ENCODE measurements at regions of chr3 and their contacts with region 1.

Region 1: DNA sequence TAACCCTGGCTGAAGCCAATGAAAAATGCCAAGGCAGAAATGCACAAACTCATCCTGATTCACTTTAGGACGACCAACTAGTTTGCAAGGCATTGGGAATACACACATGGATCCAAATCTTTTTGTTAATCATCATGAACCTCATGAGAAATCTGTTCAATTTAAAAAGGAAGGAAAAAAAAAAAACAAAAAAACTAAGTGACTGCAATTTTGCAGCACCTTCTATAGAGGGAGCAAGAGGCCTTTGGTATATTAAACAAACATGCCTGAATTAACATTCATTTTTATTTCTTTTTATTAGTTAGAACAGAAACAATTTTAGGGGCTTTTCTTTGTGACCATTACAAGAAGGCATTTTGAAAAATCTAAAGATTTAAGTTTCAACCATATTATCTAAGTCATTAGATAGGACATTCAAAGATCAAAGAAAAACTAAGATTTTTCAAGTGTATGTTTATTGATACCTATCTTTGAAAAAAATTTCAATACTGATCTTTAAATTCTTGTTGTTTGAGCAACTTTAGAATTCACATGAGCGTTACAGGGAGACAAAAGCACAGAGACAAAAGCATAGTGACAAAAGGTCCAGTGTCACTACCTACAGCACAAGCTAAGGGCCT is 182.4 kb downstream of the CBLB start:
- DNase-seq: peak in 4 of 5 donors; percentile 51 to 56 (median 52)
- H3K4me3 ChIP-seq: no peak overlapping the region
- H3K4me3 Mint-ChIP-seq: no peak overlapping the region
- H3K27ac ChIP-seq: no peak overlapping the region
- H3K27ac Mint-ChIP-seq: peak overlapping the region in 4 of 7 donors; percentile 31 to 79 (median 61)
- H3K4me1 ChIP-seq: peaks cover 18% of the 10 kb centered on the region
- H3K4me1 Mint-ChIP-seq: peaks cover 21 to 28% (median 23%) of the 10 kb centered on the region in 4 donors
- H3K27me3 ChIP-seq: no peaks in the 10 kb centered on the region
- H3K27me3 Mint-ChIP-seq: no peaks in the 10 kb centered on the region

Region 2: GRCh38 chr3:105746226-105746996 is 60.0 kb after region 1 on chr3:
- CTCF ChIA-PET with region 1: no interaction called
- POLR2A ChIA-PET with region 1: no interaction called
- intact Hi-C with region 1: no loop called
- DNase-seq: no peak
- H3K4me3 ChIP-seq: no peak overlapping the region
- H3K4me3 Mint-ChIP-seq: peak overlapping the region; percentile 48 to 83 (median 66)
- H3K27ac ChIP-seq: no peak overlapping the region
- H3K27ac Mint-ChIP-seq: peak overlapping the region; percentile 40 to 91 (median 76)
- H3K4me1 ChIP-seq: peaks cover 64% of the 10 kb centered on the region
- H3K4me1 Mint-ChIP-seq: peaks cover 46 to 72% (median 54%) of the 10 kb centered on the region in 4 donors
- H3K27me3 ChIP-seq: no peaks in the 10 kb centered on the region
- H3K27me3 Mint-ChIP-seq: no peaks in the 10 kb centered on the region

Region 3: GRCh38 chr3:105806361-105806760 is 120.0 kb after region 1 on chr3:
- CTCF ChIA-PET with region 1: no interaction called
- POLR2A ChIA-PET with region 1: no interaction called
- intact Hi-C with region 1: loop called (anchors 2 kb)
- DNase-seq: peak in 4 of 5 donors; percentile 50 to 79 (median 62)
- H3K4me3 ChIP-seq: no peak overlapping the region
- H3K4me3 Mint-ChIP-seq: peak overlapping the region in 5 of 8 donors; percentile 0 to 48 (median 3)
- H3K27ac ChIP-seq: no peak overlapping the region
- H3K27ac Mint-ChIP-seq: peak overlapping the region; percentile 35 to 89 (median 76)
- H3K4me1 ChIP-seq: peaks cover 59% of the 10 kb centered on the region
- H3K4me1 Mint-ChIP-seq: peaks cover 46 to 72% (median 54%) of the 10 kb centered on the region in 4 donors
- H3K27me3 ChIP-seq: no peaks in the 10 kb centered on the region
- H3K27me3 Mint-ChIP-seq: no peaks in the 10 kb centered on the region

Region 4: DNA sequence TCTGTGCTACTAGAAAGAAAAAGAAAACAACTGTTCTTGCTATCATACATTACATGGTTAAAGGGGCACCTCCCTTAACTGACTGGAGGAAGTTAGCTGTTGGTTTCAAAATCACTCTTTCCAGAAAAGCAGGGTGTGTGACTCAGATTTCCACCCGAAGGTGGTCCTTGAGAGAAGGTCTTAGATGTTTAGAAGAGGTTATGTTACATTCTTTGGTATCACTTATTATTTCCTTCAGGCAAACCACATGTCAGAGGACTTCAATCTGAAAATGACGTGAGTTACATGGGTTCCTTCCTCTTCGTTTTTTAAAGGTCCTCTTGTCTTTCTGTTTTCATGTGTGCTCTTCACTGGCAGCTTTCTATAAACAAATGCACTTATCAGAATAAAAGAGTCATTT is 490.3 kb after region 1 on chr3:
- CTCF ChIA-PET with region 1: no interaction called
- POLR2A ChIA-PET with region 1: no interaction called
- intact Hi-C with region 1: loop called (anchors 1 kb)
- DNase-seq: peak; percentile 68 to 82 (median 76)
- H3K4me3 ChIP-seq: peak overlapping the region in 1 of 2 donors; percentile 30
- H3K4me3 Mint-ChIP-seq: peak overlapping the region; percentile 67 to 86 (median 74)
- H3K27ac ChIP-seq: no peak overlapping the region
- H3K27ac Mint-ChIP-seq: peak overlapping the region; percentile 62 to 95 (median 76)
- H3K4me1 ChIP-seq: peaks cover 48% of the 10 kb centered on the region
- H3K4me1 Mint-ChIP-seq: peaks cover 39 to 63% (median 46%) of the 10 kb centered on the region in 4 donors
- H3K27me3 ChIP-seq: no peaks in the 10 kb centered on the region
- H3K27me3 Mint-ChIP-seq: no peaks in the 10 kb centered on the region

Region 5: DNA sequence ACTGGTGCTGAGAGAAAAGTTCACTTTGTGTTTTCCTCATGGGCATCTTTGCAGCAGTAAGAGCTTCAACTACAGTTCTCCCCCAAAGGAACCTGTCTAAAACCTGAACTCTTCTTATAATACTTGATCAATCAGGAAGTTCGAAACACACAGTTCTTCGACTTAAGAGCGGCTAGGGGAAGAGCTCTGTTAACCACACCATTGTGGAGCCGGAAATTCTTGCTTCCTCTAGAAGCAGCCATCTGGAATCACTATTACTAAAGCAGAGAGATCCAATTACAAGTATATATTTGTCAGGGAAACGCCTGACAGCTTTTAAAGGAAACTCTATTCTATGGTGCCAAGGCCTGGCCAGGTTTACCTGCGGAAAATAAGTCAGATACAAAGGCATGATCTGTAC is 519.8 kb after region 1 on chr3:
- CTCF ChIA-PET with region 1: interaction called, 3 read pairs
- POLR2A ChIA-PET with region 1: no interaction called
- intact Hi-C with region 1: loop called (anchors 2 kb)
- DNase-seq: peak; percentile 21 to 43 (median 30)
- H3K4me3 ChIP-seq: peak overlapping the region in 1 of 2 donors; percentile 2
- H3K4me3 Mint-ChIP-seq: peak overlapping the region; percentile 31 to 84 (median 77)
- H3K27ac ChIP-seq: no peak overlapping the region
- H3K27ac Mint-ChIP-seq: peak overlapping the region; percentile 59 to 88 (median 81)
- H3K4me1 ChIP-seq: peaks cover 28% of the 10 kb centered on the region
- H3K4me1 Mint-ChIP-seq: peaks cover 24 to 38% (median 27%) of the 10 kb centered on the region in 4 donors
- H3K27me3 ChIP-seq: no peaks in the 10 kb centered on the region
- H3K27me3 Mint-ChIP-seq: no peaks in the 10 kb centered on the region

Region 6: DNA sequence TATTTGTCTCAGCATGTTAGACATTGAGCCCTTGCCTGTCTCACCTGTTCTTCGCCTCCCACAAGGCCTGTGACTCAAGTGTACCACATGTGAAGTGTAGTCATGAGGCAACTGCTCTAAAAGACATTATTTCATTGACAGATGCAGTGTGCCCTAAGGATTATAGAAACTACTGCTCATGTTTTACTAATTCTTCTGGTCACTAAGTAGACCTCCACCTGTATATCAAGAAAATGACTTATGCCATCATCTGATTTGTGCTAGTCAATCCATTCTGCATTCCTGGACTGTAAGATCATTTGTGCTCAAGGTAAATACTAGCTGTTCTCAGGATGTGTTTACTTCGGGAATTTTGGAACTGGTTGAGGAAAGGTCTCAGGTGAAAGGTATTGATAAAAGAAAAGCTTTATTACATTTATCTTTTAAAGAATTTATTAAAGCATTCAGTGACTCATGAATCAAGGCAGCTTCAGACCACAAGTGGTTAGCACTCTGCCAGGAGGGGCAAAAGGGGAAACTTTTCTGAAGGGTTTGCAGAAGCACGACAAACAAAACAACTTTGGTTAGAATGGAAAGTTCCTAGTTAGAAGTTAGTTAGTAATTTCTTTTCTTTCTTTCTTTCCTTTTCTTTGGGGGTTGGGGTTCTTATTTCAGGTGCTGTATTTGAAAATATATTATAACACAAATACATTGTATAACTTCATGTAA is 647.7 kb after region 1 on chr3:
- CTCF ChIA-PET with region 1: no interaction called
- POLR2A ChIA-PET with region 1: no interaction called
- intact Hi-C with region 1: loop called (anchors 5 kb)
- DNase-seq: peak in 4 of 5 donors; percentile 17 to 66 (median 28)
- H3K4me3 ChIP-seq: peak overlapping the region in 1 of 2 donors; percentile 8
- H3K4me3 Mint-ChIP-seq: peak overlapping the region; percentile 14 to 71 (median 56)
- H3K27ac ChIP-seq: no peak overlapping the region
- H3K27ac Mint-ChIP-seq: peak overlapping the region; percentile 25 to 68 (median 43)
- H3K4me1 ChIP-seq: peaks cover 53% of the 10 kb centered on the region
- H3K4me1 Mint-ChIP-seq: peaks cover 37 to 70% (median 50%) of the 10 kb centered on the region in 4 donors
- H3K27me3 ChIP-seq: no peaks in the 10 kb centered on the region
- H3K27me3 Mint-ChIP-seq: no peaks in the 10 kb centered on the region

Region 7: DNA sequence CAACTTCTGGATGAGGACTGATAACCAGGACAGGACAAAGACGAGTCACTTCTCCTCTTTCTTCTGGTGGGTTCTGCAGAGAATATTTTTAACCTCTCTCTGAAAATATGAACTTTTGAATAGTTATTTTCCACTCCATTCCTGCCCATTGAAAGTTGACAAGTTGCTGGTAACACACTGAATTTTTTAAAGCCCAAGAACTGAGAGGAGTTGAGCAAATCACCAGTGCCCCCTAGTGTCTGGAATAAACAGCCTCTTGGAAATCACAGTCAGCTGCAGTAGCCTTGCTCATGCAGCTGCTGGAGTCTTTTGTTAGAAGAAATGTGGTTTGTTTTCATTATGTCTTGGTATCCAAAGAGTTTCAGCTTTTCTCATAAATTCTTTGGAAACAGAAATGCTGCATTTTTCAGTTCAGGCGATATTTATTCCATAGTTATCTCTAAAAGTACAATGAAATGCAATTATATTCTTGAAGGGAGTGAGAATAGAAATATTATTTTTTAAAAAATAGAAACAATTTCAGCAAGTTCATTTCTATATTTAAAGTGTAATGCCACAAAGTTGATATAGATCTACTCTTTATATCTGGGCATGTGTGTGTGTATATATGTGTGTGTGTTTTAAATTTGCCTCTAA is 923.4 kb after region 1 on chr3:
- CTCF ChIA-PET with region 1: interaction called, 47 read pairs
- POLR2A ChIA-PET with region 1: interaction called, 4 read pairs
- intact Hi-C with region 1: loop called (anchors 1 kb)
- DNase-seq: peak; percentile 58 to 73 (median 68)
- H3K4me3 ChIP-seq: no peak overlapping the region
- H3K4me3 Mint-ChIP-seq: no peak overlapping the region
- H3K27ac ChIP-seq: no peak overlapping the region
- H3K27ac Mint-ChIP-seq: no peak overlapping the region
- H3K4me1 ChIP-seq: no peaks in the 10 kb centered on the region
- H3K4me1 Mint-ChIP-seq: peaks cover 1 to 6% (median 4%) of the 10 kb centered on the region in 4 donors
- H3K27me3 ChIP-seq: no peaks in the 10 kb centered on the region
- H3K27me3 Mint-ChIP-seq: peaks cover 0 to 1% of the 10 kb centered on the region in 2 donors

Region 8: GRCh38 chr3:107064445-107065060 is 1378.2 kb after region 1 on chr3:
- CTCF ChIA-PET with region 1: no interaction called
- POLR2A ChIA-PET with region 1: no interaction called
- intact Hi-C with region 1: loop called (anchors 5 kb)
- DNase-seq: peak; percentile 43 to 47 (median 44)
- H3K4me3 ChIP-seq: no peak overlapping the region
- H3K4me3 Mint-ChIP-seq: peak overlapping the region in 2 of 8 donors; percentile 7 to 61
- H3K27ac ChIP-seq: no peak overlapping the region
- H3K27ac Mint-ChIP-seq: no peak overlapping the region
- H3K4me1 ChIP-seq: peaks cover 3% of the 10 kb centered on the region
- H3K4me1 Mint-ChIP-seq: peaks cover 6 to 11% (median 8%) of the 10 kb centered on the region in 4 donors
- H3K27me3 ChIP-seq: no peaks in the 10 kb centered on the region
- H3K27me3 Mint-ChIP-seq: no peaks in the 10 kb centered on the region